ENCODE measurements at regions of chr1 and their contacts with region 1.

Region 1: DNA sequence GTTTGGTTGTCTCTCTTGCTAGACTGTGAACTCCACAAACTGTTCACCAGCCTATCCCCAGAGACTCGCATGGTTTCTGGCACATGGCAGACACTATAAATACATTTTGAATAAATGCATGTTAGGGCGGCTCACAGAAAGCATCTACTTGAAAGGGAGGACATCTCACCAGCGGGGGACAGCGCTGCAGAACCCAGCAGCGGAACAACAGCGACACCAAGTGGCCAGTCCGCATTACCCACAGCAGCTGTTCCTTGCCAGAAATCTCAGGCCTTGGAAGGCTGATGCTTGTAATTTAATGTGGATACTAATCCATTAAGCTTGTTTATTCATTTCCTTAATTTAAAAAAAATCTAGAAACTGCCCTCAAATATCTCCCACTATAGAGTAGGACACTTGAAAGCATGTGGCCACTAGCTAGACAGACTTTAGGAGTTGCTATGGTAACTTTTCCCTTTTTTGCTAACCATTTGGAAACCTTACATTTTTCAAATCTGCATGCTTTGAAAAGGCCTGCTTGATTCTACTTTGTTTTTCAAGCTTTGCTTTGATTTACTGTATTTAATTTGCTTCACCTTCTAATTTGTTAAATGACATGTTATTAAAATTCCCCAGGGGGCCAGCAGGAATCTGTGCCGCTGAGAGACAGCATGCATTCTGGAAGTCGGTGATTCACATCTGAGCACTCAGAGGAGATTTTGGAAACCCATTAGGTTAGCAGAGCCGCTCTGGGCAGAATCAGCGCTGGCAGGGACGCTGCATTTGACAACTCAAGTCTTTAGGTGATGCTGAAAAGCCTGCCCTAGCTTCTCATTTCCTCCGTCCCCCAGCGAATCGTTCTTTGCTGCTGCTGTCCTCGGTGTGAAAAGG is 63.5 kb upstream of the SSX2IP start:
- DNase-seq: peak; percentile 58 to 76
- H3K4me3 ChIP-seq: no peak overlapping the region
- H3K27ac ChIP-seq: no peak overlapping the region
- H3K4me1 ChIP-seq: peaks cover 0 to 9% (median 0%) of the 10 kb centered on the region in 4 donors
- H3K27me3 ChIP-seq: no peaks in the 10 kb centered on the region
- CTCF ChIP-seq: peak; percentile 92 to 98

Region 2: DNA sequence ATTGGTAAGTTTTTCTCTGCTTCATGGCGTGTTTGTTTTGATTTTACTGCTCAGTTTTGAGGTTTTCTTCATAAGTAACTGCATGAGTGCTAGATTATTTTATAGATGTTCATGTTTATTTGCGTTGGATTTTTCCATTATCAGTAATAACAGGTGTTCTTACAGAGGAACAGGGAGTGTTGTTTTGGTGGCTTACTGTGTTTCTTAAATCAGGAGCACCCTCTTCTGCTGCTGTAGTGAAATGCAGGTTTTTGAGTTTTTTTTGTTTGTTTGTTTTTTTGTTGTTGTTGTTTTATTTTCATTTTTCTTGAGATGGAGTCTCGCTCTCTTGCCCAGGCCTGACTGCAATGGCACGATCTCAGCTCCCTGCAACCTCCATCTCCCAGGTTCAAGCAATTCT is 212.1 kb before region 1 on chr1:
- intact Hi-C with region 1: no loop called
- DNase-seq: no peak
- H3K4me3 ChIP-seq: no peak overlapping the region
- H3K27ac ChIP-seq: no peak overlapping the region
- H3K4me1 ChIP-seq: no peaks in the 10 kb centered on the region
- H3K27me3 ChIP-seq: no peaks in the 10 kb centered on the region
- CTCF ChIP-seq: no peak

Region 3: GRCh38 chr1:84668185-84668584 is 85.6 kb before region 1 on chr1:
- intact Hi-C with region 1: loop called (anchors 1 kb)
- DNase-seq: no peak
- H3K4me3 ChIP-seq: no peak overlapping the region
- H3K27ac ChIP-seq: no peak overlapping the region
- H3K4me1 ChIP-seq: no peaks in the 10 kb centered on the region
- H3K27me3 ChIP-seq: no peaks in the 10 kb centered on the region
- CTCF ChIP-seq: peak; percentile 22 to 40